ENCODE measurements at regions of chr2 and their contacts with region 1.

Region 1: GRCh38 chr2:39124000-39124745 is 3.3 kb upstream of the SOS1 start:
- DNase-seq: peak; percentile 98
- ATAC-seq: peak; percentile 72
- H3K4me3 Mint-ChIP-seq: peak overlapping the region; percentile 85
- H3K27ac Mint-ChIP-seq: peak overlapping the region; percentile 94
- H3K4me1 Mint-ChIP-seq: peaks cover 68% of the 10 kb centered on the region
- H3K27me3 Mint-ChIP-seq: no peaks in the 10 kb centered on the region

Region 2: GRCh38 chr2:39107156-39107555 is 17.0 kb before region 1 on chr2:
- CTCF ChIA-PET with region 1: interaction called, 13 read pairs
- POLR2A ChIA-PET with region 1: interaction called, 9 read pairs
- DNase-seq: no peak
- ATAC-seq: no peak
- H3K4me3 Mint-ChIP-seq: no peak overlapping the region
- H3K27ac Mint-ChIP-seq: peak overlapping the region; percentile 45
- H3K4me1 Mint-ChIP-seq: peaks cover 68% of the 10 kb centered on the region
- H3K27me3 Mint-ChIP-seq: no peaks in the 10 kb centered on the region

Region 3: DNA sequence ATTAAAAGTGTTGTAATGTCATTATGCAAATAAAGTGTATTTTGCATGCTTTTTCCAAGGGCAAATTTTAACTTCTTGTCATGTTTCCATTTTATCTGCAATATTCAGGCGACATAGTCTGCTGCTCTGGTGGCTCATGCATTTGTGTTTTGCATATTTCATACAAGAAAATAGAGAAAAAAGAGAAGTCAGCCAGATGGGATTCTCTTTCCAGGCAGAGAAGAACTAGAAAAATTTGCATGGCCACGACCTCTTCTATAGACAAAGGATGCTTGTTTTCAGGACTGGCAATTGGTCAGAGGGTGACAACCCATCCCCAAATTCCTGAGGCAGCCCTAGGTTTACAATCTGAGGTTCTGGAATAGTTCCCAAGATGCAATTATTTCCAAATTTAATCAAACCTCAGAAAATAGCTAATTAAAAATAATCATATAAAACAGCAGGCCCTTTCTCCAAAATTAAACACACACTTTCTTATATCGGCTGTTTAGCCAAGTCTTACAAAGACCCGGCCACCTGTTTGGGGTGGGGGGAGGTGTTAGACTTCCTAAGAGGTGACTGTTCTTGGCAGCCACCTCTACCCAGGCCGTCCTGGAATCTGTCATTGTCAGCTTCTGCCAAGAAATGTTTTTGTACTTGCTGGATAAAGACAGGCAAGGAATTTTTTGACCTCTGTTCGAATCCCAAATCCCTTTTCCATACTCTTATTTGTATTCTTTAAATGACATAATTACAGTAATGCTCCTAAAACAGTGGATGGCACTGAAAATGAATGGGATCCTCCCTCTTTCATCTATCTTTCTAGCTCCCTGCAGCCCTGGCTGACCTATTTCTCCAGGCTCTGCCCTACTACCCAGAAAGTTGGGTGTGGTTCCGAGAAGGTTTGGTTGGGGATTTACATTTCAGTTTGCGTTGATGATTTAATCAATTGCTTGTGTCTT is 17.4 kb after region 1 on chr2:
- CTCF ChIA-PET with region 1: interaction called, 10 read pairs
- POLR2A ChIA-PET with region 1: interaction called, 17 read pairs
- DNase-seq: no peak
- ATAC-seq: no peak
- H3K4me3 Mint-ChIP-seq: no peak overlapping the region
- H3K27ac Mint-ChIP-seq: peak overlapping the region; percentile 47
- H3K4me1 Mint-ChIP-seq: peaks cover 65% of the 10 kb centered on the region
- H3K27me3 Mint-ChIP-seq: no peaks in the 10 kb centered on the region

Region 4: DNA sequence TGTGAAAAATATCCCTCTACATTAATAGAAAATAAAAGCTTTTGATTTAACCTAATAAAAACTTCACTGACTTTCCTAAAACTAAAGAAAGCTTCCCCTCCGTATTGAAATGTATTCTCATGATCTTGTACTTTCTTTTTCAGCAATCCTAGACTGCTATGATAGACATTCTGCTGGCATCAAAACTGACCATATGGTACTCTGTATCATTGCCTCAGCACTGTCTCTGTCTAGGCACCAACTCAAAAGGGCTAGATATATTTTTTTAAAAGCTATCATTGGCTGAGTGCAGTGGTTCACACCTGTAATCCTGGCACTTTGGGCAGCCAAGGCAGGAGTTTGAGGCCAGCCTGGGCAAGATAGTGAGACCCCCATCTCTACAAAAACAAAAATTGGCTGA is 86.7 kb after region 1 on chr2:
- CTCF ChIA-PET with region 1: interaction called, 27 read pairs
- POLR2A ChIA-PET with region 1: interaction called, 315 read pairs
- DNase-seq: no peak
- ATAC-seq: no peak
- H3K4me3 Mint-ChIP-seq: no peak overlapping the region
- H3K27ac Mint-ChIP-seq: peak overlapping the region; percentile 27
- H3K4me1 Mint-ChIP-seq: peaks cover 57% of the 10 kb centered on the region
- H3K27me3 Mint-ChIP-seq: no peaks in the 10 kb centered on the region

Measured in activated CD8-positive, alpha-beta T cell treated with anti-CD3 and anti-CD28 coated beads, Interleukin-2, amount 10 ng/mL, durations not matched to agents 7 days and 5 days (primary cell).